ENCODE measurements at regions of chr3 and their contacts with region 1.

Region 1: DNA sequence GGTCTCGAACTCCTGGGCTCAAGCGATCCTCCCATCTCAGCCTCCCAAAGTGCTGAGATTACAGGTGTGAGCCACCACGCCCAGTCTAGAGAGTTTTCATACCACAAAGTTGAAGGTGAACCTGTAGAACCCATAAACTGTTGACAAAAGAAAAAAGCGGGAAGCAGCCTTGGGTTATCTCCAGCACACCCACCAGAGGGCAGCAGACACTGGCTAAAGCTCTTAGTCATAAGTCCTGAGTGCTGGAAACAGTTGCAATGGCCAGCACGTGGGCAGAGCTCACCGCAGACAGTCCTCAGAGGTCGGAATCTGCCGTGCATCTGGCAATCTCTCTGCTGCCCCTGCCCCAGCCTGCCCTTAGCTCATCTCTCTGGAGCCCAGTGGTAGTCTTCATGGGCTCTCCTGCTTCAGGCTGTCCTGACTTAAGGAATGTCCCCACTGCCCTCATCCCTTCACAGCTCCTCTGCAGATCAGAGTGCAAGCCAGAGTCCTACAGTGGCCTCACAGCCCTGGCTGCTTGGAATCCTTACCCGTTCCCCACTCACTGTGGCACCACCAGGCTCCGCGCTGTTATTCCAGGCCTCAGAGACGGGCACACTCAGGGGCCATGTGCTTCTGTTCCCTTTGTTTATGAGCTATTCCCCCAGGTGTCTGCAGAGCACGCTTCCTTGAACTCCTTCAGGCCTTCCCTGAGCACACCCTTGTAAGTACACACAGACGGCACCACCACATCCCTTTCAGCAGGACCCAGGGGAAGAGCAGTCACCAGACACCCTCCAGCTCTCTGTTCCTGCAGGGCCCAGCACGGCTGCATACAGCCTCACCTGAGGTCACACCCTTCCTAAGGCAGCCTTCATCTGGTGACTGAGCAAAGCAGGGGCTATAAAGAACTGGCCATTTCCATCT is 8.8 kb upstream of the ELP6 start:
- DNase-seq: peak; percentile 83
- ATAC-seq: peak; percentile 95

Region 2: GRCh38 chr3:47443611-47443995 is 78.7 kb before region 1 on chr3:
- intact Hi-C with region 1: no loop called
- DNase-seq: no peak
- ATAC-seq: peak; percentile 21

Region 3: DNA sequence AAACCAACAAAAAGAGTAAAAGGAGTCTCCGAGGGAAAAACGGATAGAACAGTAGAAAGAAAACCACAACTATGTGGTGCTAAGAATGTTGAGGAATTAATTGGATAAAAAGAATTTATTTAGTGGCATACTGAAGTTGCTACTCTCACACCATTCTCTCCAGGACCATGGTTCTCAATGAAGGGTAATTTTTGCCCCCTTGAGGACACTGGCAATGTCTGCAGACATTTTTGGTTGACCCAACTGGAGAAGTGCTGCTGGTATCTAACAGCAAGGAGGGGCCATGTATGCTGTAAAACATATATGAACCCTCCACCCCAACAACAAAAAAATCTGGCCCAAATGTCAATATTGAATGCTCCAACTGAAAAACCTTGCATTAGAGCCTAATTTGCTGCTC is 142.2 kb after region 1 on chr3:
- intact Hi-C with region 1: loop called (anchors 10 kb)
- DNase-seq: no peak
- ATAC-seq: no peak

Region 4: GRCh38 chr3:47791193-47791855 is 269.0 kb after region 1 on chr3:
- intact Hi-C with region 1: loop called (anchors 1 kb)
- DNase-seq: no peak
- ATAC-seq: no peak